Mammary epithelial cell (primary cell): ENCODE measurements at regions of chr6 and their contacts with region 1.

Region 1: DNA sequence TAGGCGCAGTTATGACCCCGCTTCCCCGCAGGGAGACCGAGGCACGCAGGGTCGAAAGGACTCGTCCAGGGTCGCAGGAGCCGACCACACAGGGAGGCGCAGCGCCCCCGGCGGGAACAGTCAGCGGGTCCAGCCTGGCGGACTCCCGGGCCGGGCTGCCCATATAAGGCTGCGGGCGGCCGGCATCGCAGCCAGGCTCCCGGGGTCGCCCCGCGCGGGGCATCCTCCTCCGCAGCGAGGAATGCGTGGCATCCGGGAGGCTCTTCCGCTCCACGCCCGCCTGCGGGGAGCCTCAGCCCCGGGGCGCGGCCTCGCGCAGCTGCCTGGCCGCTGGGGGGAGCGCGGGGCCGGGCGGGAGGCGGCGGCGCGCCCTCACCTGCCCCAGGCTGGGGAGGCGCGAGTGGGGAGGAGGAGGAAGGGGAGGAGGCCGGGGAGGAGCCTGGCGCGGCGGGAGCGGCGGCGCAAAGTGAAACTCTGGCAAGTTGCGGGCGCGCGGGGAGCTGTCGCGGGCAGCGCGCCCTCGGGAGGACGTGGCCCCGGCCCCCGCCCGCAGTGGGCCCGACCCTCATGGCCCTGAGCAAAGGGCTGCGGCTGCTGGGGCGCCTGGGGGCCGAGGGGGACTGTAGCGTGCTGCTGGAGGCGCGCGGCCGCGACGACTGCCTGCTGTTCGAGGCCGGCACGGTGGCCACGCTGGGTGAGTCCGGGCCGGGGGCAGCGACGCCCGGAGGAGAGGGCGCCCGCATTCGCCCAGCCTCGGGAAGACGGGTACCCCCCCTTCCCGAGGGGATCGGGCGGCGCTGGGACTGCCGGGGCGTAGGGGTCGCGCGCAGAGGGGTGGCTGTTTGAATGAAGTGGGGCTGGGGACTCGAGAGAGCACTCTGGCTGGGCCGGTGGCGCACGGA is at the start of gene SYNJ2:
- DNase-seq: peak; percentile 78
- H3K4me3 ChIP-seq: peak within 1 kb of the TSS; percentile 82 to 85 (median 83)
- H3K27ac ChIP-seq: peak within 1 kb of the TSS; percentile 26
- H3K4me1 ChIP-seq: peaks cover 32% of the 10 kb centered on the region
- H3K27me3 ChIP-seq: no peaks in the 10 kb centered on the region
- CTCF ChIP-seq: peak; percentile 13 to 43
- total RNA-seq, gene SYNJ2: 16.0 to 26.6 TPM

Region 2: DNA sequence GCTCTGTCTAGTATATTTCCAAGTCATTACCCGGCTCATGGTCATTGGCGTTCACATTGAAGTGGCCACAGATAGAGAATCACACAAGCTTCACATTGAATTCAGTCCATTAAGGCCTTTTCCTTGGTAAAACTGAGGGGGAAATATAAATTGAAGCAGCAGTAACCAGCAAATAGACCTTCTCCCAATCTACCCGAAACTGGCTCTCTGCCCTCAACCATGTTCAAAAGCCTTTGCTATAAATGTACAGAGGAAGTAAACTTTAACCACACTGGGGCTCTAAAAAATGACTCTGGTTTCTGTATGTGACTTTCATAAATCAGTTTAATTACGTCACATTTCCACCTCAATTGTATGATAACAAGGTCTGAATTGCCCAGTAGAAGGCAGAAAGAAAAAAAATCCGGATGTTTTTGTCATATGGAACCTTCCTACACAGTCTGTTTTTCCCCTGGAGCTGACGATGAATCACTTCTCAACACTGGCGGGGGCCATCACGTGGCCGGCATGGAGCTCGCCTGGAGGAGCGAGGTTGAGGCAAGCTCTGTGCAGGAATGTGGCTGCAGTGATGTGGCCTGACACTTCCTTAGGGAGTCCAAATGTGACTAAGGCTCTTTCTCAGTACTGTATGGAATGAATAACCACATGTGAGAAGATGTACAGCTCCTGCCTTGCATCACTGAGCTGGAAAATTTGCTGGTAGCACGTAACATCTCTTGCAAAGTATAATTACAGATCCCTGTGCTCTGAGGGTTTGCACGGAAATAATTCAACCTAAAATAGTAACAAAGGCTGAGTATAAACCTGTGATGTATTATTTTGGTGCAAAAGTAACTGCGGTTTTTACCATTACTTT is 217.2 kb before region 1 on chr6:
- CTCF ChIA-PET with region 1: no interaction called
- dilution Hi-C with region 1: no loop called
- in situ Hi-C with region 1: no loop called
- intact Hi-C with region 1: loop called (anchors 5 kb)
- DNase-seq: peak; percentile 100
- H3K4me3 ChIP-seq: no peak overlapping the region
- H3K27ac ChIP-seq: peak overlapping the region; percentile 98
- H3K4me1 ChIP-seq: peaks cover 53% of the 10 kb centered on the region
- H3K27me3 ChIP-seq: no peaks in the 10 kb centered on the region
- CTCF ChIP-seq: no peak

Region 3: GRCh38 chr6:157946865-157947532 is 34.6 kb before region 1 on chr6:
- CTCF ChIA-PET with region 1: no interaction called
- dilution Hi-C with region 1: no loop called
- in situ Hi-C with region 1: no loop called
- intact Hi-C with region 1: loop called (anchors 2 kb)
- DNase-seq: no peak
- H3K4me3 ChIP-seq: no peak overlapping the region
- H3K27ac ChIP-seq: no peak overlapping the region
- H3K4me1 ChIP-seq: no peaks in the 10 kb centered on the region
- H3K27me3 ChIP-seq: no peaks in the 10 kb centered on the region
- CTCF ChIP-seq: peak in 1 of 2 donors; percentile 33

Region 4: GRCh38 chr6:158002951-158003853 is 21.6 kb after region 1 on chr6:
- CTCF ChIA-PET with region 1: no interaction called
- dilution Hi-C with region 1: no loop called
- in situ Hi-C with region 1: no loop called
- intact Hi-C with region 1: loop called (anchors 1 kb)
- DNase-seq: peak; percentile 71
- H3K4me3 ChIP-seq: no peak overlapping the region
- H3K27ac ChIP-seq: peak overlapping the region; percentile 80
- H3K4me1 ChIP-seq: peaks cover 39% of the 10 kb centered on the region
- H3K27me3 ChIP-seq: no peaks in the 10 kb centered on the region
- CTCF ChIP-seq: no peak

Region 5: GRCh38 chr6:158040051-158040803 is 58.6 kb after region 1 on chr6:
- CTCF ChIA-PET with region 1: no interaction called
- dilution Hi-C with region 1: no loop called
- in situ Hi-C with region 1: no loop called
- intact Hi-C with region 1: loop called (anchors 2 kb)
- DNase-seq: peak; percentile 91
- H3K4me3 ChIP-seq: no peak overlapping the region
- H3K27ac ChIP-seq: no peak overlapping the region
- H3K4me1 ChIP-seq: peaks cover 48% of the 10 kb centered on the region
- H3K27me3 ChIP-seq: no peaks in the 10 kb centered on the region
- CTCF ChIP-seq: no peak

Region 6: GRCh38 chr6:158057213-158057987 is 75.8 kb after region 1 on chr6:
- CTCF ChIA-PET with region 1: no interaction called
- dilution Hi-C with region 1: no loop called
- in situ Hi-C with region 1: loop called in 1 of 2 experiments (anchors 10 kb)
- intact Hi-C with region 1: no loop called
- DNase-seq: peak; percentile 96
- H3K4me3 ChIP-seq: no peak overlapping the region
- H3K27ac ChIP-seq: peak overlapping the region; percentile 62
- H3K4me1 ChIP-seq: peaks cover 33% of the 10 kb centered on the region
- H3K27me3 ChIP-seq: no peaks in the 10 kb centered on the region
- CTCF ChIP-seq: no peak

Region 7: DNA sequence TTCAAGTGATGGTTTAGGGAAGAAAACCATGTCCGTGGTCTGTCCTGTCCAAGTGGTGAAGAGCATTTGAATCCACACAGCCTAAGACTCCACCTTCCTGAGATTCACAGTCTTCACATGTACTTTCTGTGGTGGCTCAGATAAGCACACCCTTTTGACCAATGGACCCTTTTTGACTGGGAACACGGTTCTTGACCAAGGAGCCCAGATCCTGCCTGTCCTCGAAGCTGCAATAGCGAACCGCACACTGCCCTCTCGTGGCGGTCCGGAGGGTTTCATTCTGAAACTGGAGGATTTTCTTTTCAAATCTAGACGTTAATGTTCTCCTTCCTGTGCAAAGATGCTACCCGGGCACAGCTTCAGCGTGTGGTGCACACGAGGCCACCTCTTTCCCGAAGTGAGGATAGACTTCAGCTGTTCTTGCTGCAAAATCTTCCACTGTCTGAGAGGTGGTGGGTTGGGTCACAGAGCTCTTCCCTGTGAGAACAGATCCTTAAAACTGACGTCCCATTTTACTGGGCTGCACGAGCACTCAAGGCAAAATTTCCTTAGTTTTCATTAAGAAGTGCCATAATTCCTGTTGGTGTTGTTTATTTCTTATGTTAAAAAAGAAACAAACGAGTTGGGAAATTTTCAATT is 90.6 kb after region 1 on chr6:
- CTCF ChIA-PET with region 1: interaction called, 4 read pairs
- dilution Hi-C with region 1: no loop called
- in situ Hi-C with region 1: no loop called
- intact Hi-C with region 1: loop called (anchors 1 kb)
- DNase-seq: peak; percentile 46
- H3K4me3 ChIP-seq: no peak overlapping the region
- H3K27ac ChIP-seq: no peak overlapping the region
- H3K4me1 ChIP-seq: peaks cover 26% of the 10 kb centered on the region
- H3K27me3 ChIP-seq: no peaks in the 10 kb centered on the region
- CTCF ChIP-seq: peak; percentile 74 to 87